ENCODE measurements at regions of chrX and their contacts with region 1.

Region 1: GRCh38 chrX:70454441-70455365 is 10.1 kb downstream of the DLG3 start:
- ATAC-seq: peak; percentile 39 to 93 (median 88)
- H3K4me3 ChIP-seq: peak overlapping the region; percentile 44 to 68 (median 52)
- H3K27ac ChIP-seq: peak overlapping the region; percentile 91 to 94
- H3K4me1 ChIP-seq: peaks cover 8% of the 10 kb centered on the region in 2 donors

Region 2: GRCh38 chrX:70664726-70665125 is 210.0 kb after region 1 on chrX:
- in situ Hi-C with region 1: loop called in 1 of 9 experiments (anchors 25 kb)
- ATAC-seq: peak in 3 of 8 experiments; percentile 25 to 43 (median 31)
- H3K4me3 ChIP-seq: no peak overlapping the region
- H3K27ac ChIP-seq: no peak overlapping the region
- H3K4me1 ChIP-seq: peaks cover 0 to 8% of the 10 kb centered on the region in 2 donors